ENCODE measurements at regions of chr15 and their contacts with region 1.

Region 1: DNA sequence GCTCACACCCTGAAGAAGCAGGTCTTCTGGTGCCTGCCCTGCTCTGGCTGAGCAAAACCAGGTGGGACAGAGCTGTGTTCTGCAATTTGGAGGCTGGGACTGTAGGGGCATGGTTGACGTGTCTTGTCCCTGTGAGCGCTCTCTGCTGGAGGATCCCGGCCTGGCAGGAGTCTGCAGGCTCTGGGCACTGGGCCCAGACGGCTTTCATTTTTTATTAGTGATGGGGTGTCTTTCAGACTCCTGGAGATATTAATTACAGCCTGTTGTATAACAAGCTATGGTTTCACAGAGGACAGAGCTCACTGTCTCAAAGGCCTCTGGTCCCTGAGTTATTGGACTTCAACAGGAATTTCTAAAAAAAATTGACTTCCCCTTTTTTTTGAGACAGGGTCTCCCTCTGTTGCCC is 29.5 kb upstream of the ZNF710 start:
- DNase-seq: peak; percentile 49 to 90
- H3K4me3 ChIP-seq: no peak overlapping the region
- H3K27ac ChIP-seq: no peak overlapping the region
- H3K4me1 ChIP-seq: peaks cover 0 to 3% (median 0%) of the 10 kb centered on the region in 4 experiments; a peak in 1 of 7 replicates
- H3K27me3 ChIP-seq: no peaks in the 10 kb centered on the region
- CTCF ChIP-seq: peak; percentile 96 to 99 (median 99)
- EP300 ChIP-seq: no peak
- POLR2A ChIP-seq: no peak
- RAD21 ChIP-seq: peak; percentile 72 to 88

Region 2: GRCh38 chr15:89893696-89894455 is 77.7 kb before region 1 on chr15 and contains the start of gene AP3S2:
- CTCF ChIA-PET with region 1: interaction called, 34 read pairs
- POLR2A ChIA-PET with region 1: interaction called, 5 read pairs
- DNase-seq: peak; percentile 70 to 89
- H3K4me3 ChIP-seq: peak within 1 kb of the TSS; percentile 92 to 99 (median 98)
- H3K27ac ChIP-seq: peak within 1 kb of the TSS; percentile 81
- H3K4me1 ChIP-seq: no peaks in the 10 kb centered on the region; a peak in 2 of 7 replicates
- H3K27me3 ChIP-seq: no peaks in the 10 kb centered on the region
- CTCF ChIP-seq: no peak
- EP300 ChIP-seq: peak in 1 of 2 experiments; percentile 27; a peak in 1 of 3 replicates
- POLR2A ChIP-seq: peak; percentile 57 to 89
- RAD21 ChIP-seq: peak in 1 of 2 experiments; percentile 12; a peak in 1 of 4 replicates
- total RNA-seq, gene AP3S2: 42.3 and 45.4 TPM in 2 replicates

Region 3: DNA sequence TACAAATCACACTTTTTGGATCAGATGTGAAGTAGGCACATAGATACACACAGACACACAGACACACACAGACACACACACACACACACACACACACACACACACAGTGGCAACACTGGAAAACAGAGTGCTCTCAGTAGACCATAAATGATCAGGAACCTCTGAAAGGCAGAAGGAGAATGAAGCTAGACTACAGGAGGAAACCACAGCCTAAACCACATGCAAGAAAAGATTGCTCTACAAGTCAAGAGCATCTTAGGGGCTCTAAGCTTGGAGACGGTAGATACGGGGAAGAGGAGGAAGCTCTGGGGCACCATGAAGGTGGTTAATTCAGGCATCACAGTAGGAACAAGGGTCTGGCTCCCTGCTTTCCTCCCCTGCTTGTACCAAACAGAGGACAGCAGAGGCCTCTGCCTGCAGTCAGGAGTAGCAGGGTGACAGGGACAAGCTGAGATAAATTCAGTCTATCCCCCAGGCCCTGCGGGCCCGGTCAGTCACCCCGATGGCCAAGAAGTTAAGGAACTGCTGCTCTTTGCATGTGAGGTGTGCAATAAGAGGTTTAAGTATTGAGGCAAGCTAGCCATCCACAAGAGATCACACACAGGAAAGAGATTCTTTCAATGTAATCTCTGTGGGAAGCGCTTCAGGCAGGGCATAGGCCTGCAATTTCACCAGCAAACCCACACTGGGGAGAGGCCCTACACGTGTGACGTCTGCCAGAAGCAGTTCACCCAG is 35.4 kb before region 1 on chr15:
- CTCF ChIA-PET with region 1: interaction called, 12 read pairs
- POLR2A ChIA-PET with region 1: no interaction called
- DNase-seq: no peak
- H3K4me3 ChIP-seq: no peak overlapping the region
- H3K27ac ChIP-seq: no peak overlapping the region
- H3K4me1 ChIP-seq: no peaks in the 10 kb centered on the region
- H3K27me3 ChIP-seq: no peaks in the 10 kb centered on the region
- CTCF ChIP-seq: no peak
- EP300 ChIP-seq: no peak
- POLR2A ChIP-seq: no peak
- RAD21 ChIP-seq: no peak

Region 4: GRCh38 chr15:89985111-89985510 is 13.5 kb after region 1 on chr15:
- CTCF ChIA-PET with region 1: interaction called, 45 read pairs
- POLR2A ChIA-PET with region 1: interaction called, 3 read pairs
- DNase-seq: no peak
- H3K4me3 ChIP-seq: no peak overlapping the region
- H3K27ac ChIP-seq: no peak overlapping the region
- H3K4me1 ChIP-seq: peaks cover 0 to 8% (median 2%) of the 10 kb centered on the region in 4 experiments; a peak in 4 of 7 replicates
- H3K27me3 ChIP-seq: peaks cover 18 to 43% (median 38%) of the 10 kb centered on the region in 4 experiments
- CTCF ChIP-seq: no peak
- EP300 ChIP-seq: no peak
- POLR2A ChIP-seq: no peak
- RAD21 ChIP-seq: no peak

Region 5: DNA sequence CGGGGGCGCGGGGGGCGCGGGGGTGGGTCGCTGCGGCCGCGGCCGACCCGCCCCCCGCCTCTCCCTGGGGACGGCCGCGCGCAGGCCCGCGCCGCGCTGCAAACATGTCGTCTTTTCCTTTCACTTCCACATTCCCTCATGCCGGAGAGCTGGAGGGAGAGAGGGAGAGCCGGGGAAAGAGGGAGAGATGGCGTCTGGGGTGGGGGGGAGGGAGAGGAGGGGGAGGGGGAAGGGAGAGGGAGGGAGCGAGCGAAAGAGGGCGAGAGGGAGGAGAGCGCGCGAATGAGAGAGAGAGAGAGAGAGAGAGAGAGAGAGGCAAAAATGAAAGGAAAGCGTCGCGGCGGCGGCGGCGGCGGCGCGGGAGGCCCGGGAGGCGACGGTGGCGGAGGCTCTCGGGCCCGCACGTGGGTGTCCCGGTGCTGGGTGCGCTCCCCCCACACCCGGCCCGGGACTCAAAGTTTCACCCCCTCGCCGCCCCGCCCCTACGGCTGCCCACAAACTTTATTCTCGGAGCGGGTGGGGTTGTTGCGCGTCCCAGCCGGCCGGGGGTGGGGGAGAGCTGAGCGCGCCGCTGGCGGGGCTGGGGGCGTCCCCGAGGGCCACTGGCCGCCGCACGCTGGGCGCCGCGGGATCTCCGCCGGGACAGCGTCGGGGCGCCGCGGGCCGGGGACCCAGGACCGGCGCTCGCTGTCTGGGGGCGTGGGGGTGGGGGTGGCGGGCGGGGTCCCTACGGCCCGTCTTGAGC is 30.3 kb after region 1 on chr15:
- CTCF ChIA-PET with region 1: interaction called, 12 read pairs
- POLR2A ChIA-PET with region 1: interaction called, 4 read pairs
- DNase-seq: peak in 1 of 2 experiments; percentile 65
- H3K4me3 ChIP-seq: peak overlapping the region; percentile 56 to 88 (median 71)
- H3K27ac ChIP-seq: no peak overlapping the region; the same call in 1 of the 2 replicates
- H3K4me1 ChIP-seq: peaks cover 18 to 33% (median 20%) of the 10 kb centered on the region in 4 experiments
- H3K27me3 ChIP-seq: peaks cover 0 to 7% (median 2%) of the 10 kb centered on the region in 4 experiments; a peak in 2 of 7 replicates
- CTCF ChIP-seq: no peak
- EP300 ChIP-seq: no peak; a peak in 1 of 3 replicates
- POLR2A ChIP-seq: no peak
- RAD21 ChIP-seq: no peak

Region 6: DNA sequence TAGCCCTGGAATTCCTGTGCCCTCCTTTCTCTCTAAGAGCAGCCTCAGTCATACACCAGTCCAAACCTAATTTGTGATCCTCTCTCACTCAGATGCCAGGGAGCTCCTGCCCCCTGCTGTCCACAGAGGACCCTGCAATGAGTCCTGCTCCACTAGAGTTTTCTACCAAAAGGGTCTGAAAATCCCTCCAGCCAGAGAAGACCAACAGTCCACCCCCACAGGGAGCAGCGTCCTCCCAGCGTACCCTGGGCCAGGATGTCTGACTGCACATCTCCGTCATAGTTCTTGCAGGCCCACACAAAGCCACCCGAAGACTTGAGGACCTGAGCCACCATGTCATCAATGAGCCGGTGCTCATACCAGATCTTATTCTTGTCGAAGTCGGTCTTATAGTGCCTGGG is 115.3 kb after region 1 on chr15:
- CTCF ChIA-PET with region 1: interaction called, 10 read pairs
- POLR2A ChIA-PET with region 1: no interaction called
- DNase-seq: peak in 1 of 2 experiments; percentile 75
- H3K4me3 ChIP-seq: no peak overlapping the region
- H3K27ac ChIP-seq: no peak overlapping the region
- H3K4me1 ChIP-seq: peaks cover 0 to 5% (median 2%) of the 10 kb centered on the region in 4 experiments; a peak in 3 of 7 replicates
- H3K27me3 ChIP-seq: no peaks in the 10 kb centered on the region
- CTCF ChIP-seq: peak; percentile 82 to 88 (median 84)
- EP300 ChIP-seq: no peak
- POLR2A ChIP-seq: no peak
- RAD21 ChIP-seq: peak; percentile 90 to 94